ENCODE measurements at regions of chr1 and their contacts with region 1.

Region 1: DNA sequence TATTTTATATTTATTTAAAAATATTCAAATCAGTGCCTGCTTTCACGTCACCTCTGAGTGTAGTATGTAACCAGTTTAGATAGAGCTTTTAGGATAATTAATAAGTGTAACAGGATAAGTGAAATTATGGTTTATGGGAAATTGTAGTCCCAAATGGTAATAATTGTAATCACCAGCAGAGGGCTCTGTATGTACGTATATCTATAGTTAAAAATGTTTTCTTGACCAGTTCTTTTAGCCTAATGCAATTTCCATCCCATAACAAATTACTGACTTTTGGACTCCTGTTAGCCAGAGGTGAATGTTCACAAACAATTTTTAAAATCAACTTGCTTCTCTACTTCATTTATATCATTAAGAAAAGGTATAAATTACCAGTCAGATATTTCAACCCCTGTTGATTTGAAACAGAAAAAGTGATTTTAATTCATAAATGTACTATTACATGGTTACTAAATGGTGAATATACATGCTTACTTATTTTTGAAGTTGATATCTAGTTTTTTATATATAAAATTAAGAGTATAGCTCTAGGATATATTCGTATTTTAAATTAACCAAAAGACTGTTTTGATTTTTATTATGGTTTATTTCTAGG is 25.3 kb downstream of the SLC30A7 start:
- DNase-seq: peak; percentile 74
- ATAC-seq: peak; percentile 47
- H3K4me3 ChIP-seq: no peak overlapping the region
- H3K4me3 Mint-ChIP-seq: no peak overlapping the region
- H3K27ac ChIP-seq: no peak overlapping the region
- H3K27ac Mint-ChIP-seq: no peak overlapping the region
- H3K4me1 ChIP-seq: peaks cover 0 to 7% of the 10 kb centered on the region in 2 donors
- H3K4me1 Mint-ChIP-seq: peaks cover 17% of the 10 kb centered on the region
- H3K27me3 ChIP-seq: no peaks in the 10 kb centered on the region
- H3K27me3 Mint-ChIP-seq: no peaks in the 10 kb centered on the region
- CTCF ChIP-seq: peak; percentile 93

Region 2: GRCh38 chr1:100905181-100905580 is 16.0 kb before region 1 on chr1:
- CTCF ChIA-PET with region 1: no interaction called
- POLR2A ChIA-PET with region 1: no interaction called
- intact Hi-C with region 1: no loop called
- DNase-seq: no peak
- ATAC-seq: no peak
- H3K4me3 ChIP-seq: no peak overlapping the region
- H3K4me3 Mint-ChIP-seq: no peak overlapping the region
- H3K27ac ChIP-seq: no peak overlapping the region
- H3K27ac Mint-ChIP-seq: no peak overlapping the region
- H3K4me1 ChIP-seq: no peaks in the 10 kb centered on the region
- H3K4me1 Mint-ChIP-seq: no peaks in the 10 kb centered on the region
- H3K27me3 ChIP-seq: no peaks in the 10 kb centered on the region
- H3K27me3 Mint-ChIP-seq: no peaks in the 10 kb centered on the region
- CTCF ChIP-seq: no peak

Region 3: DNA sequence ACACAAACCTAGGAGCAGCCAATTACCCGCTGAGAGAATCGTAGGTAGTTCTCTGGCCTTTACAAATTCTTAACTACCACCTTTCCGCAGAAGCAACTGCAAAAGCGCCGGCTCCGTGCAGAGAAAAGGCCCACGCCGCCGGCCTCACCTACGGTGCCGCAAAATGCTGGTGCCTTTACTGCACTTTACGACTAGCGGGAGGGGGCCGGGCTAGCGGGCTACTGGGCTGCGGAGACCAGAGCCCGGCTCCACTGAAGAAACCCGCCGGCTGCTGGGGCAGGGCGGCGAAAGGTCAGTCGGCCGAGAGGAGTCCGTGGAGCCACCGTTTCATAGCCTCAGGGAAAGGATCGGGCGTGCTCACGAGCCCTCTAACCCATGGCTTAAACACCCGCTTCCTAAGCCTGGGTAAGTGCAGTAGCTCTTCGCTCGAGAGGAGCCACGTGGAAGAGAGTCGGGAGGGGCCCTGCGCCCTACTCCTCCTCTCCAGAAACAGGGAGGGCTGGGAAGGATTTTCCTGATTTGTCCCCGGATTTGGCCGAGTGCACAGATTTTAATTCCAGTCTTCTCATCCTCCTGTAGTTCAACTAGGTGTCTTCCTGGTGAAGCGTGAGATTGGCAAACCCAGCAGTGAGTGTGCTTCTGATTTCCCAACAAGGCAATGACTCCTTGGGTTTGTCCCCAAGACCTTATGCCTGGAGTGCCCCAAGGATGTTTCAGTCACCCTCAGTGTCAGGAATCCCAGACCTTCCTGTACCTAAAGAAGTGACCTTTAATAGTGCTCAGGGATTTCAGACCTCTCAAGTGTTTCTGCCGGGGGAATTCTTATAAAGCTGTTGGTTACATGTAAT is 104.7 kb after region 1 on chr1 and contains the start of gene DPH5:
- CTCF ChIA-PET with region 1: no interaction called
- POLR2A ChIA-PET with region 1: no interaction called
- intact Hi-C with region 1: loop called (anchors 10 kb)
- DNase-seq: peak; percentile 90
- ATAC-seq: peak; percentile 96
- H3K4me3 ChIP-seq: peak within 1 kb of the TSS; percentile 81 to 97 (median 92)
- H3K4me3 Mint-ChIP-seq: peak within 1 kb of the TSS; percentile 98
- H3K27ac ChIP-seq: peak within 1 kb of the TSS; percentile 78 to 85
- H3K27ac Mint-ChIP-seq: peak within 1 kb of the TSS; percentile 97
- H3K4me1 ChIP-seq: peaks cover 45 to 47% of the 10 kb centered on the region in 2 donors
- H3K4me1 Mint-ChIP-seq: peaks cover 50% of the 10 kb centered on the region
- H3K27me3 ChIP-seq: no peaks in the 10 kb centered on the region
- H3K27me3 Mint-ChIP-seq: no peaks in the 10 kb centered on the region
- CTCF ChIP-seq: no peak
- total RNA-seq, gene DPH5: 39.4 and 42.5 TPM in 2 replicates

Region 4: GRCh38 chr1:101136739-101137138 is 215.5 kb after region 1 on chr1:
- CTCF ChIA-PET with region 1: interaction called, 10 read pairs
- POLR2A ChIA-PET with region 1: no interaction called
- intact Hi-C with region 1: loop called (anchors 5 kb)
- DNase-seq: peak; percentile 54
- ATAC-seq: peak; percentile 70
- H3K4me3 ChIP-seq: no peak overlapping the region
- H3K4me3 Mint-ChIP-seq: peak overlapping the region; percentile 17
- H3K27ac ChIP-seq: peak overlapping the region; percentile 1 to 32
- H3K27ac Mint-ChIP-seq: peak overlapping the region; percentile 70
- H3K4me1 ChIP-seq: peaks cover 38 to 40% of the 10 kb centered on the region in 2 donors
- H3K4me1 Mint-ChIP-seq: peaks cover 49% of the 10 kb centered on the region
- H3K27me3 ChIP-seq: no peaks in the 10 kb centered on the region
- H3K27me3 Mint-ChIP-seq: no peaks in the 10 kb centered on the region
- CTCF ChIP-seq: no peak

Region 5: GRCh38 chr1:101282314-101283038 is 361.3 kb after region 1 on chr1:
- CTCF ChIA-PET with region 1: interaction called, 190 read pairs
- POLR2A ChIA-PET with region 1: no interaction called
- intact Hi-C with region 1: no loop called
- DNase-seq: no peak
- ATAC-seq: no peak
- H3K4me3 ChIP-seq: no peak overlapping the region
- H3K4me3 Mint-ChIP-seq: no peak overlapping the region
- H3K27ac ChIP-seq: no peak overlapping the region
- H3K27ac Mint-ChIP-seq: no peak overlapping the region
- H3K4me1 ChIP-seq: peaks cover 19 to 21% of the 10 kb centered on the region in 2 donors
- H3K4me1 Mint-ChIP-seq: peaks cover 24% of the 10 kb centered on the region
- H3K27me3 ChIP-seq: no peaks in the 10 kb centered on the region
- H3K27me3 Mint-ChIP-seq: no peaks in the 10 kb centered on the region
- CTCF ChIP-seq: no peak

Region 6: GRCh38 chr1:101357444-101357986 is 436.3 kb after region 1 on chr1:
- CTCF ChIA-PET with region 1: interaction called, 38 read pairs
- POLR2A ChIA-PET with region 1: no interaction called
- intact Hi-C with region 1: loop called (anchors 1 kb)
- DNase-seq: peak; percentile 88
- ATAC-seq: peak; percentile 98
- H3K4me3 ChIP-seq: no peak overlapping the region
- H3K4me3 Mint-ChIP-seq: no peak overlapping the region
- H3K27ac ChIP-seq: no peak overlapping the region
- H3K27ac Mint-ChIP-seq: no peak overlapping the region
- H3K4me1 ChIP-seq: peaks cover 4 to 7% of the 10 kb centered on the region in 2 donors
- H3K4me1 Mint-ChIP-seq: peaks cover 7% of the 10 kb centered on the region
- H3K27me3 ChIP-seq: no peaks in the 10 kb centered on the region
- H3K27me3 Mint-ChIP-seq: no peaks in the 10 kb centered on the region
- CTCF ChIP-seq: peak; percentile 91

Region 7: GRCh38 chr1:101438359-101438758 is 517.2 kb after region 1 on chr1:
- CTCF ChIA-PET with region 1: interaction called, 8 read pairs
- POLR2A ChIA-PET with region 1: no interaction called
- intact Hi-C with region 1: loop called (anchors 1 kb)
- DNase-seq: peak; percentile 39
- ATAC-seq: peak; percentile 29
- H3K4me3 ChIP-seq: no peak overlapping the region
- H3K4me3 Mint-ChIP-seq: no peak overlapping the region
- H3K27ac ChIP-seq: no peak overlapping the region
- H3K27ac Mint-ChIP-seq: no peak overlapping the region
- H3K4me1 ChIP-seq: peaks cover 33 to 34% of the 10 kb centered on the region in 2 donors
- H3K4me1 Mint-ChIP-seq: peaks cover 27% of the 10 kb centered on the region
- H3K27me3 ChIP-seq: no peaks in the 10 kb centered on the region
- H3K27me3 Mint-ChIP-seq: no peaks in the 10 kb centered on the region
- CTCF ChIP-seq: peak; percentile 19

Region 8: DNA sequence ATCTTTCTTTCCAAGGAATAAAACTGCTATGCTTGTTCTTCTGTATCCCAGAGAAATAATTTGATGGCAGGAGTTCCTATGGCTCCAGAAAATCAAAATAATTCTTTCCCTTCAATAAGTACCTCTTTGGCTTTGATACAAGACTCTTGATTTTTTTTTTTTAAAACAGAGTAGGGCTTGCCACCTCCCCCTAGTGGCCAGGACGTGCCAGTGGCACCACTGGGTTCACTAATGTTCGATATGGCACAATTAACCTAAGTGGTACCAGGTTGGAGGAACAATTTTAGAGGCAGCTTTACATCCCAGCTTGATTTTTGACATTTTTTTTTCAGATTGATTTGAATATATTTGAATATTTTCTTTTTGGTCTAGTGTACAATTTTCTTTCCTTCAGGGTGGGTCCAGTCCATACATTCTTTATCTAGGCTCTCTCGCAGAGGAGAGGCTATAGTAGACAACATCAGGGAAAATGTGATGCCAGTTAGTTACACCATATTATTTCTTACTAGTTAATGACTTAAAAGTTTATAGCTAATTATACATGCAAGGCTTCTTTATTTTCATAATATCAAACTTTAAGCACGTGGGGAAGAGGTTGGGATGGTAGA is 646.5 kb after region 1 on chr1:
- CTCF ChIA-PET with region 1: interaction called, 3 read pairs
- POLR2A ChIA-PET with region 1: no interaction called
- intact Hi-C with region 1: loop called (anchors 5 kb)
- DNase-seq: peak; percentile 55
- ATAC-seq: peak; percentile 73
- H3K4me3 ChIP-seq: no peak overlapping the region
- H3K4me3 Mint-ChIP-seq: no peak overlapping the region
- H3K27ac ChIP-seq: no peak overlapping the region
- H3K27ac Mint-ChIP-seq: no peak overlapping the region
- H3K4me1 ChIP-seq: no peaks in the 10 kb centered on the region
- H3K4me1 Mint-ChIP-seq: no peaks in the 10 kb centered on the region
- H3K27me3 ChIP-seq: peaks cover 0 to 2% (median 0%) of the 10 kb centered on the region in 4 experiments
- H3K27me3 Mint-ChIP-seq: peaks cover 22% of the 10 kb centered on the region
- CTCF ChIP-seq: peak; percentile 98

Measured in B cell (primary cell).